ENCODE measurements at regions of chr5 and their contacts with region 1.

Region 1: GRCh38 chr5:145375506-145375905 is 459.6 kb downstream of the PRELID2 start:
- DNase-seq: no peak
- H3K4me3 ChIP-seq: no peak overlapping the region
- H3K27ac ChIP-seq: no peak overlapping the region
- H3K4me1 ChIP-seq: no peaks in the 10 kb centered on the region
- H3K27me3 ChIP-seq: no peaks in the 10 kb centered on the region
- CTCF ChIP-seq: no peak

Region 2: DNA sequence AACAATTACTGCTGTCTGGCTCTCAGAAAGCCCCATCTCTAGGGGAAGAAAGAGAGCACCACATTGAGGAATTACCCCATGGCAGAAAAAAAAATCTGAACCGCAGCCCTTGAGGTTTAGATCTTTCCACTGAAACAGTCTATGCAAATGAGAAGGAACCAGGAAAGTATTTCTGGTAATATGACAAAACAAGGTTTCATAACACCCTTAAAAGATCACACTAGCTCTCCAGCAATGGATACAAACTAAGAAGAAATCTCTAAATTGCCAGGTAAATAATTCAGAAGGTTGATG is 32.5 kb after region 1 on chr5:
- CTCF ChIA-PET with region 1: interaction called, 19 read pairs
- dilution Hi-C with region 1: no loop called
- in situ Hi-C with region 1: no loop called
- intact Hi-C with region 1: no loop called
- DNase-seq: no peak
- H3K4me3 ChIP-seq: no peak overlapping the region
- H3K27ac ChIP-seq: no peak overlapping the region
- H3K4me1 ChIP-seq: peaks cover 7% of the 10 kb centered on the region
- H3K27me3 ChIP-seq: no peaks in the 10 kb centered on the region
- CTCF ChIP-seq: no peak